ENCODE measurements at regions of chr2 and their contacts with region 1.

Region 1: GRCh38 chr2:97663965-97664635 is at the start of gene ACTR1B:
- DNase-seq: peak; percentile 98
- ATAC-seq: peak; percentile 89
- H3K4me3 ChIP-seq: peak within 1 kb of the TSS; percentile 57
- H3K27ac ChIP-seq: peak within 1 kb of the TSS; percentile 95
- H3K4me1 ChIP-seq: peaks cover 9% of the 10 kb centered on the region
- H3K27me3 ChIP-seq: no peaks in the 10 kb centered on the region
- CTCF ChIP-seq: peak; percentile 65
- POLR2A ChIP-seq: peak; percentile 53
- RAD21 ChIP-seq: peak; percentile 40
- total RNA-seq, gene ACTR1B: 34.2 and 40.5 TPM in 2 replicates

Region 2: GRCh38 chr2:96065381-96065930 is 1598.6 kb before region 1 on chr2:
- CTCF ChIA-PET with region 1: no interaction called
- POLR2A ChIA-PET with region 1: no interaction called
- dilution Hi-C with region 1: no loop called
- in situ Hi-C with region 1: loop called (anchors 25 kb)
- intact Hi-C with region 1: no loop called
- DNase-seq: no peak
- ATAC-seq: no peak
- H3K4me3 ChIP-seq: no peak overlapping the region
- H3K27ac ChIP-seq: no peak overlapping the region
- H3K4me1 ChIP-seq: no peaks in the 10 kb centered on the region
- H3K27me3 ChIP-seq: peaks cover 13% of the 10 kb centered on the region
- CTCF ChIP-seq: no peak
- POLR2A ChIP-seq: no peak
- RAD21 ChIP-seq: no peak

Region 3: GRCh38 chr2:97645695-97646629 is 18.1 kb before region 1 on chr2 and contains the start of gene COX5B:
- CTCF ChIA-PET with region 1: interaction called, 3 read pairs
- POLR2A ChIA-PET with region 1: interaction called, 15 read pairs
- dilution Hi-C with region 1: no loop called
- in situ Hi-C with region 1: no loop called
- intact Hi-C with region 1: no loop called
- DNase-seq: peak; percentile 93
- ATAC-seq: peak; percentile 99
- H3K4me3 ChIP-seq: peak within 1 kb of the TSS; percentile 85
- H3K27ac ChIP-seq: peak within 1 kb of the TSS; percentile 74
- H3K4me1 ChIP-seq: peaks cover 5% of the 10 kb centered on the region; the same call in 1 of the 2 replicates
- H3K27me3 ChIP-seq: no peaks in the 10 kb centered on the region
- CTCF ChIP-seq: no peak
- POLR2A ChIP-seq: peak; percentile 80
- RAD21 ChIP-seq: no peak
- total RNA-seq, gene COX5B: 140 and 148 TPM in 2 replicates